Colonic mucosa (tissue), 4 donors: ENCODE measurements at regions of chr1 and their contacts with region 1.

Region 1: DNA sequence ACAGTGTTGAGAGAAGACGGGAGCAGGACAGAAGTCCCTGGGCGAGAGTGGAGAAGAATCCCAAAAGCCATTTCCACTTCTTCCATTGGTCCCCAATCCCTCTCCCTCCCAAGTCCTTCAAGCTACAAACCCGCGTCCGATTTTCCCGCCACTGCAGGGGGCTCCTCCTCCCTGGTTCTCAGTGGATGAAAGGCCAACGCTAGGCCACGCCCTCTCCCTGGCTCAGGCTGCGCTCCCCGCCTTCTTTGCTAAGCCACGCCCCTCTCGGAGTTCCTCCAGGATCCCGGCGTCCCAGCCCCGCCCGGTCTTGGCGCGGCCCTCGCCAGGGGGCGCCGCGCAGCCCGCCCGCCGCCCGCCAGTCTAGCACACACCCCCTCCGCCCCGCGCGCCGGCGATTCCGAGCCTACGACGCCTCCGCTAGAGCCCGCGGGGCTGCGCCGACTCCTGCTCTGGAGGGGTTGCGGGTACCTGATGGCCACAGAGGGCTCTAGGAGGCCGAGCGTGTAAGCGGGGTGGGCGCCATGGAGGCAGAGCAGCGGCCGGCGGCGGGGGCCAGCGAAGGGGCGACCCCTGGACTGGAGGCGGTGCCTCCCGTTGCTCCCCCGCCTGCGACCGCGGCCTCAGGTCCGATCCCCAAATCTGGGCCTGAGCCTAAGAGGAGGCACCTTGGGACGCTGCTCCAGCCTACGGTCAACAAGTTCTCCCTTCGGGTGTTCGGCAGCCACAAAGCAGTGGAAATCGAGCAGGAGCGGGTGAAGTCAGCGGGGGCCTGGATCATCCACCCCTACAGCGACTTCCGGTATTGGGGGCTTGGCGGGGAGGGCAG is at the start of gene HCN3:
- DNase-seq: peak; percentile 99
- H3K4me3 ChIP-seq: peak within 1 kb of the TSS; percentile 81
- H3K27ac ChIP-seq: peak within 1 kb of the TSS; percentile 72
- H3K4me1 ChIP-seq: no peaks in the 10 kb centered on the region
- H3K27me3 ChIP-seq: no peaks in the 10 kb centered on the region
- CTCF ChIP-seq: peak; percentile 75
- total RNA-seq, gene HCN3: 12.4 to 12.8 TPM

Region 2: GRCh38 chr1:155323798-155324610 is 46.7 kb after region 1 on chr1:
- intact Hi-C with region 1: loop called (anchors 5 kb)
- DNase-seq: peak; percentile 98
- H3K4me3 ChIP-seq: peak overlapping the region; percentile 83
- H3K27ac ChIP-seq: peak overlapping the region; percentile 96
- H3K4me1 ChIP-seq: peaks cover 20% of the 10 kb centered on the region
- H3K27me3 ChIP-seq: no peaks in the 10 kb centered on the region
- CTCF ChIP-seq: no peak